Activated T-helper 1 cell treated with anti-CD3 and anti-CD28 coated beads, Interleukin-12 subunit alpha, Interleukin-12 subunit beta, Interleukin-2, Interleukin-4 antibody, amounts not matched to agents 30 ng/mL and 10 ng/mL and 1 ng/mL, durations not matched to agents 14 hours and 24 hours and 36 hours (primary cell): ENCODE measurements at regions of chr12 and their contacts with region 1.

Region 1: DNA sequence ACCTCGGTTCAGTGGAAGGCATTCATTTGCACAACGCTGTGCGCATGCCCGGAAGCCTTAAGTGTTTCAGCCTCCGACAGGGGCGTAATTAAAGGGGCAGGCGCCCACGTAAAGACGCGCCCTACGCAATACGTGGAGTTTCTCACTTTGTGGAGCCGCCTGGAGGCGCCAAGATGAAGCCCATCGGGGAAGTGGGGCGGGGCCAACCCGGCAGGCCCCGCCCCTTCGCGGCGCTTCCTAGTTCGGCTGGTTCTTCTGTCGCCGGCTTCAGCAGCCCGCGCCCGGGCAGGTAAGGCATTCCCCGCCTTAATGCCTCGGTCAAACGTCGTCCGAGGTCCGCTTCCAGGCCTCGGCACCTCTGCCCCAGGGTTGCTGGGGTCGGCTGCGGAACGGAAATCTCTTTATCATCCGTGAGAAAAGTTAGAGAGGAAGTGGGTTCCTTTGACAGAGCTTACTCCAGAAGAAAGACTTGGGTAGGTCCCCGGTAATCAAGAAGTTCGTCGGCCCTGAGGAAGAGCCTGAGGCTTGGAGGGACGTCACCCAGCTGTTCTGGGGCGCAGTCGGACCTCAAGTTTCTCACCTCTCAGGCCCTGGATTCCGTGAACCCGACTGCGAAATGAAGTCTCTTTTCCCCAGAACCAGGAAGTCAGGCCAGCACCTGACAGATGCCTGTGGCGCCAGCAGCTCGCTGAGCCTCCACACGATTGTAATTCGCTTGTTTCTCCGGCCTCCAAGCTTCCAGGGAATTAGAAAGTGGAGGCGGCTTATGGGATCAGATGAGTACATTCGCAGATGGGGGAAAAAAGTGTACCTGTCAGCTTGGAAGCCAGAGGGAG is at the starts of genes IRAK4 and PUS7L:
- DNase-seq: peak; percentile 91
- H3K4me3 Mint-ChIP-seq: peak within 1 kb of the TSS; percentile 98
- H3K27ac Mint-ChIP-seq: peak within 1 kb of the TSS; percentile 98
- H3K4me1 Mint-ChIP-seq: peaks cover 68% of the 10 kb centered on the region
- H3K27me3 Mint-ChIP-seq: no peaks in the 10 kb centered on the region
- total RNA-seq, gene IRAK4: 21.4 and 22.5 TPM in 2 replicates
- total RNA-seq, gene PUS7L: 23.1 and 25.4 TPM in 2 replicates

Region 2: DNA sequence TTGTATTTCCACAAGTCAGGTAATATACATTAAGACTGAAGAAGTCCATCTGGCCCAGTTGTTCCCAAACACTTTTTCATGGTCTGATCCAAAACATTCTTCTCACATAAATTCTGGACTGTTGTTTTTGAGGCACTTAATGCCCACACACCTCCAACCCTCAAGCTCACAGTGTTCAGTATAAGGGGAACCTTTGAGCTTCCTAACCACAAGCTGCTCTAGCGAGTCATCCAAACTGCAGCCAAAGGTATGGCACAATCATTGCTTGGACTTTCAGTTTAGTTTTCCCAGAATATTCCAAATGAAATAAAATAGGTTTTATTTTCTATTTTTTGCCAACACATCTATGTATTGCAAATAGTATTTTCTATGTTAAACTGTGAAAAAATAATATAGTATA is 103.4 kb before region 1 on chr12:
- intact Hi-C with region 1: no loop called
- DNase-seq: no peak
- H3K4me3 Mint-ChIP-seq: no peak overlapping the region
- H3K27ac Mint-ChIP-seq: no peak overlapping the region
- H3K4me1 Mint-ChIP-seq: no peaks in the 10 kb centered on the region
- H3K27me3 Mint-ChIP-seq: peaks cover 8% of the 10 kb centered on the region

Region 3: DNA sequence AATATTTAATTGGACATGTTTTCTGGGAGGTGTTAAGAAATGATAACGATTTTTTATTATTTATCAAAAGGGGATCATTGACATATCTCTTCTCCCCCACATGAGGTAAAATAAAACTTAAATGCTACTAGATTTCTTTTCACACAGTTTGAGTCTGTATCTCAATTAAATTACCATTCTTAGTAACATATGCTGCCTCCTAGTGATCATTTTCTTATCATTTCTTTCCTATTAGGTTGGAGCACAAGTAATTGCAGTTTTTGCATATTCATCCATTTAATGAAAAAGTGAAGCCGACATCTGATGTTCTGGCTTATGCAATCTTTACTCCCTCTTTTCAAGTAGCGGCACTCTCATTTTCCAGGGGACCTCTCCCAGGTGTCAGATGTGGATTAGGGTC is 25.3 kb before region 1 on chr12:
- intact Hi-C with region 1: loop called (anchors 2 kb)
- DNase-seq: no peak
- H3K4me3 Mint-ChIP-seq: no peak overlapping the region
- H3K27ac Mint-ChIP-seq: no peak overlapping the region
- H3K4me1 Mint-ChIP-seq: peaks cover 8% of the 10 kb centered on the region
- H3K27me3 Mint-ChIP-seq: no peaks in the 10 kb centered on the region

Region 4: GRCh38 chr12:43776498-43776897 is 17.6 kb after region 1 on chr12:
- intact Hi-C with region 1: no loop called
- DNase-seq: no peak
- H3K4me3 Mint-ChIP-seq: no peak overlapping the region
- H3K27ac Mint-ChIP-seq: no peak overlapping the region
- H3K4me1 Mint-ChIP-seq: peaks cover 6% of the 10 kb centered on the region
- H3K27me3 Mint-ChIP-seq: no peaks in the 10 kb centered on the region

Region 5: DNA sequence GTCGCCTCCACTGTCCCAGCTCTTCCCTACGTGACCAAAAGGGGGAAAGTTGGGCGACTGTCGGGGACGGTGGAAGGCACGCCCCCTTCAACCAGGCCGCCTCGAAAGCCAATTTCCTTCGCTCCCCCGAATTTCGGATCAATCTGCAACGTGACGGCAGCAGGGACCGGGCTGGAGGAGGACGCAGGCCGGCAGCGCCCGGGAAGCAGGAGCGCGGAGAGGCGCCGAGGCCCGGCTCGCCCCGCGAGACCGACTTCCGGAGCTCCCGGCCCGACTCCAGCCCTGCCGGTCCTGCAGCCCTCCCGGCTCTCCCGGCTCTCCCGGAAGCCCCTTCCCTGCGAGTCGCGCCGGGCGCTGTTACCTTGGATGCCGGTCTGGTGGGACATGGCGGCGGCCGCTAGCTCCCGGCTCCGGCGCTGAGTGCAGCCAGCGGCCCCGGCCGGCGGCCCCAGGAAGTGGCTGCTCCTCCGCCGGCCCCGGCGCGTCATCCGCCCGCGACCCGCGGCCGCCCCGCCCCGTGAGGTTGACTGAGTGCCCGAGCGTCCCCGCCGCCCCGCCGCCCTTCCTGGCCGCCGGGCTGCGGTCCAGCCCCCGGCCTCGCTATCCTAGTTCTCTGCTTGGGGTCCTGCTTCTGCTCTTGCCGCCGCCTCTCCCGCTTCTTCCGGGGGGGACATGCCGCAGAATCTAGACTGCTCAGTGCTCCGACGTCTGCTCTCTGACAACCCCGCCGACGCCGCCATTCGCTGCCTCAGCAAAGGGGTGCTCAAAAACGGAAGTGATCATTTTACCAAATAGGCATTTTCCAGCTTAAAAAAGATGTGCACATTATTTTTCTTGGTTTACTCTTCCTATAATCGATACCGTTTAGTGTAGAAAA is 47.2 kb after region 1 on chr12 and contains the start of gene TWF1:
- intact Hi-C with region 1: loop called (anchors 1 kb)
- DNase-seq: peak; percentile 87
- H3K4me3 Mint-ChIP-seq: peak within 1 kb of the TSS; percentile 96
- H3K27ac Mint-ChIP-seq: peak within 1 kb of the TSS; percentile 100
- H3K4me1 Mint-ChIP-seq: peaks cover 33% of the 10 kb centered on the region
- H3K27me3 Mint-ChIP-seq: peaks cover 2% of the 10 kb centered on the region
- total RNA-seq, gene TWF1: 28.4 and 29.2 TPM in 2 replicates

Region 6: GRCh38 chr12:43835656-43836474 is 76.9 kb after region 1 on chr12 and contains the start of gene TMEM117:
- intact Hi-C with region 1: loop called (anchors 1 kb)
- DNase-seq: peak; percentile 42
- H3K4me3 Mint-ChIP-seq: peak within 1 kb of the TSS; percentile 78
- H3K27ac Mint-ChIP-seq: peak within 1 kb of the TSS; percentile 64
- H3K4me1 Mint-ChIP-seq: peaks cover 37% of the 10 kb centered on the region
- H3K27me3 Mint-ChIP-seq: peaks cover 19% of the 10 kb centered on the region
- total RNA-seq, gene TMEM117: 1.1 and 2.2 TPM in 2 replicates

Region 7: GRCh38 chr12:44031472-44032185 is 272.7 kb after region 1 on chr12:
- intact Hi-C with region 1: no loop called
- DNase-seq: no peak
- H3K4me3 Mint-ChIP-seq: no peak overlapping the region
- H3K27ac Mint-ChIP-seq: no peak overlapping the region
- H3K4me1 Mint-ChIP-seq: no peaks in the 10 kb centered on the region
- H3K27me3 Mint-ChIP-seq: no peaks in the 10 kb centered on the region